Breast epithelium (tissue), 4 donors: ENCODE measurements at regions of chr6 and their contacts with region 1.

Region 1: DNA sequence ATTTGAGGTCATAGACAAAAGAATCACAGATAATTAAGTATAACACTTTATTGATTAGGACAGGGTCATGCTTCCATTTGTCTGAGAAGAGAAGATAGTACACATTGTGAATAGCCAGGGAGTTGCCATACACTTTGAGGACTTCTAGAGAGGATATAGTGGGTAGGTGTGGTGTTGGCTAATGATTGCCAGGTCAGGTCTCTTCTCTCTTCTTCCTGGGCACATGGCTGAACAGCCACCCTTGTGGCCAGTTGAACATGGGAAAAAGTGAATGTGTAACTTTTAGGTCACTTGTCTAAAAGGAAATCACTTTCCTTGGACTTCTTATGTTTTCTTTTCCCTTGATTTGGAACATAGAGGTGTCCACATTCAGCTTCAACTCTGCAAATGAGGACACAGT is 772.1 kb upstream of the MAP3K7 start:
- DNase-seq: no peak
- H3K4me3 ChIP-seq: no peak overlapping the region
- H3K27ac ChIP-seq: no peak overlapping the region
- H3K4me1 ChIP-seq: no peaks in the 10 kb centered on the region
- H3K27me3 ChIP-seq: no peaks in the 10 kb centered on the region
- CTCF ChIP-seq: no peak
- POLR2A ChIP-seq: no peak

Region 2: DNA sequence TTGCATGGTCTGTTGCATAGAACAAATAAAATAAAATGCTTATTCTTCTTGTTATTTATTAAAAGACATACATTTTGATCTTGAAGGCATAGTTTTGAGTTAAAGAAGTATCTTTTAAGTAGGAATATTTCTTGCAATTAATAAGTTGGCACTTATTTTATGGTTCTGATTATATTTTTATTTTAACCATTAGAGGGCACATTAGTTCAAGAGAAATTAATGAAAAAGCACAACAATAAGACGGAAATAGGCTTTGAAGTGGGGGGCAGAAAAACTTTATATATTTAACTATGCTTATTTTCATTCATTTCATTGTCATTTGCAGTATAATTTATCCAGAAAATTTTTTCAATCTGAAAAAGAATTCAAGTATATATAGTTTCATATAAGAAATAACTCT is 727.9 kb before region 1 on chr6:
- intact Hi-C with region 1: loop called (anchors 5 kb)
- DNase-seq: no peak
- H3K4me3 ChIP-seq: no peak overlapping the region
- H3K27ac ChIP-seq: no peak overlapping the region
- H3K4me1 ChIP-seq: no peaks in the 10 kb centered on the region
- H3K27me3 ChIP-seq: no peaks in the 10 kb centered on the region
- CTCF ChIP-seq: no peak
- POLR2A ChIP-seq: no peak